Posterior vena cava (tissue), 2 donors: ENCODE measurements at regions of chr2 and their contacts with region 1.

Region 1: DNA sequence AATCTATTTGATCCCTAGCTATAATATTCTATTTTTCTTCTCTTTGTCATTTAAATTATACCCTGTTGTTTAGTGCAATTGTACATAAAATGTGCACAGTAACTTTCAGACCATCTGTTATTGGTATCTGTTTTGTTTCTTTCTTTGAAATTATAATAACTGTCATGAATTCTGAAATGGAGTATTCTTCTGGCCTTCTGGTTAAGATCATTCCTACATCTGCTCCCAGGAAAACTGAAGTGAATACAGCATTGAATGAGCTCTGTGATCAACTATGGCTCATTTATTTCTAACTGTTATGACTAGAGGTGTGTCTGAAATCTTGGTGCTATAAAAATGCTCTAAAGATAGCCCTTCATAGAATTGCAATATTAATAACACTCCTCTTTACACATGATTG is 788.4 kb upstream of the TMEFF2 start:
- DNase-seq: no peak

Region 2: GRCh38 chr2:193428336-193428818 is 445.2 kb after region 1 on chr2:
- intact Hi-C with region 1: loop called in 1 of 2 experiments (anchors 5 kb)
- DNase-seq: no peak